Tibial artery (tissue), 4 donors: ENCODE measurements at regions of chr15 and their contacts with region 1.

Region 1: GRCh38 chr15:60585743-60586708 is 107.1 kb upstream of the ICE2 start:
- DNase-seq: peak in 1 of 2 donors; percentile 63
- H3K4me3 ChIP-seq: no peak overlapping the region
- H3K27ac ChIP-seq: no peak overlapping the region
- H3K4me1 ChIP-seq: peaks cover 0 to 11% (median 6%) of the 10 kb centered on the region in 4 donors
- H3K27me3 ChIP-seq: no peaks in the 10 kb centered on the region
- CTCF ChIP-seq: peak; percentile 78 to 86

Region 2: DNA sequence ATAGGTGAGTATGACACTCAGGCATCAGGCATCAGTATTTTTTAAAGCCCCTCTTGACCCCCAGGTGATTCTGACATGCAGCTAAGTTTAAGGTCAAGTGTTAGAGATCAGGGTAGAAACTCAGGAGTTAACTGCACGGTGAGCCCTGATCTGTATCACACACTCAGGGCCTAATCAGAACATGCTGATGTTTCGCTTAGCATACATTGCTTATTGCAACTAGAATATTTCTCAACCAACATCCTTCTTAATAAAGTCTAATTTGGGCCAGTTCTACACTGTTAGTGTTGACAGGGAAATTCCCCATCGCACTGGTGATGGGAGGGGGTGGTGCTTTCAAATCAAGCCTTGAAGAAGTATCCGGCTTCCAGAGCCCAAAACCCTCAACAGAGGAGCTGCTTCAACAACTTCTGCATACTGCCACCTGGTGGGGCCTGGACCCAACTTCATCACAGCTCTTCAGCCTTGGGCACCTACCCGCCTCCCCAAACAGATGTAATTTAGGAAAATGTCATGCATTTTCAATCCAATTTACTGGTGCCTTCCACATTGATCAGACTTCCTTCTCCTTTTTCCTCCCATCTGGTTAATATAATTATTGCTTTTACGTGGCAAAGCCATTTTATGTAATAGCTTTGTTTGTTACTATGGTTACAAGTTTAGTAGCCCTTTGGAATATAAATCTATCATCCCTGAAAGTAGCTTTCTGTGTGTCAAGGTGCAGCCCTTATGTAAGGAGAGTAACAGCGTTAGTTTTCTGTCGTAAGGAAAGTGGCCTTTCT is 330.8 kb after region 1 on chr15:
- intact Hi-C with region 1: loop called (anchors 5 kb)
- DNase-seq: peak; percentile 91 to 92
- H3K4me3 ChIP-seq: peak overlapping the region; percentile 25 to 33
- H3K27ac ChIP-seq: peak overlapping the region; percentile 65 to 76
- H3K4me1 ChIP-seq: peaks cover 0 to 38% (median 19%) of the 10 kb centered on the region in 4 donors
- H3K27me3 ChIP-seq: no peaks in the 10 kb centered on the region
- CTCF ChIP-seq: peak; percentile 86 to 89

Region 3: GRCh38 chr15:61051569-61052031 is 465.6 kb after region 1 on chr15:
- intact Hi-C with region 1: loop called (anchors 5 kb)
- DNase-seq: peak; percentile 54 to 76
- H3K4me3 ChIP-seq: no peak overlapping the region
- H3K27ac ChIP-seq: no peak overlapping the region
- H3K4me1 ChIP-seq: peaks cover 0 to 9% (median 3%) of the 10 kb centered on the region in 4 donors
- H3K27me3 ChIP-seq: no peaks in the 10 kb centered on the region
- CTCF ChIP-seq: peak; percentile 61 to 68

Region 4: DNA sequence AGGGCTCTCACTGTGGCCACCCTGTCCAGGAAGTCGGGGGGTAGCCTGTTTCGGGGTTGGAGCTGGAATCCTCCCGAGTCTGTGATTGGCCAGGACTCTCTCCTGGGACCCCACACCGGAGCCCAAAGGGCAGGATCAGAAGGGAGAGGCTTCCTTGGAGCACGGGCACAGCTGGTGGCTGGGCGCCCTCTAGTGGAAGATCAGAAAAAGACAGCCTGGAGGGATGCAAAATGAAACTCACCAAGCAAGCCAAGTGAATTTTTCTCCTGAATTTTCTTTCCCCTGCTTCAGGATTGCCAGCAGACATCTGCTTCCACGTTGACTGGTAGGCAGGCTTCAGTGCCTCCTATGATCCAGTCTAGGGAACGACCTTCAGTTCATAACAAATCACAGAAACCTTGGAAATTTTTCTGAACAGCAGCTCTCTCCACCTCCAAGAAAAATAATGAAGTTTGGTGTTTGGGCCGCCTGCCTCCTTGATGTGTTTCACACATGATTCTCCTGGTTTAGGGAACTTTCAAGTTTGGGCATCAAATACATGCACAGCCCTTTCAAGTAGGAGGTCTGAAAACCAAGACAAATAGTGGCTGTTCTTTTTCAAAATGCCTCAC is 1249.6 kb after region 1 on chr15:
- intact Hi-C with region 1: loop called (anchors 5 kb)
- DNase-seq: peak; percentile 66 to 78
- H3K4me3 ChIP-seq: peak overlapping the region; percentile 6 to 29
- H3K27ac ChIP-seq: peak overlapping the region in 1 of 2 donors; percentile 4
- H3K4me1 ChIP-seq: peaks cover 0 to 12% (median 4%) of the 10 kb centered on the region in 4 donors
- H3K27me3 ChIP-seq: peaks cover 0 to 4% of the 10 kb centered on the region in 2 donors
- CTCF ChIP-seq: peak; percentile 79 to 98